Activated CD4-positive, alpha-beta T cell treated with anti-CD3 and anti-CD28 coated beads, Interleukin-2, amount 10 ng/mL, durations not matched to agents 7 days and 5 days (primary cell): ENCODE measurements at regions of chr19 and their contacts with region 1.

Region 1: DNA sequence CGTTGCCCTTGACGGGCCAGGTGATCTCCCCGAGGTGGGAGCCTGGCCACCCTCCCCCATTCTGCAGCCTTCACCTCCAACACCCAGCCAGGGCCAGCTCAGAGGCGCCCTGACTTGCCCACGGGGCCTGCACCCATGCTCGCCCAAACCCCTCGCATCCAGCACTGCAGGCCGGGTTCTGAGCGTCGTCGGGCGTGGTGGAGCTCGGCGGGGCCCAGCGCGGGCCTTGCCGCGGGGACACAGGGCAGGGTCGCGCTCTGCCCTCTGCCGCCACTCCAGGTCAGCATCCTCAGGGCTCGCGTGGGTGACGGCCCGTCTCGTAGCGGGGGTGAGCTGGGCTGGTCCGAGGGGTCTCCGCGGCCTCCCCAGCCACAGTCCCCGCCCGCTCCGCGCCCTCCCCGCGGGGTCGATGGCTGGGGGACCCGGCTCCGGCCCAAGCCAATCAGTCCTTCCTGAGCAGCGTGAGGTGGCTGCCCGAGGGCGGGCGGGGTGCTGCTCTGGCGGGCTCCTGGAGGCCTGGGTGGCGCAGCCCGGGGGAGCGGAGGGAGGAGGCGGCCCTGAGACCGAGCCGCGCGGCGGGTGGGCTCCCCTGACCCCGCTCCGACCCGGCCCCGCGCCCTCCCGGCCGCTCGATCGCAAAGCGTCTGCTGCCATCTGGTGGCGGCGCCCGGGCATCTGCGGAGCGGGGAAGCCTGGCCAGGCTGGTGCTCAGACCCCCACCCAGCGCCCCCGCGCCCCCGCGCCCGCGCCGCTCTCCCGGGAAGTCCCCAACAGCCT is 61.4 kb downstream of the CCNE1 start:
- DNase-seq: peak; percentile 57
- H3K4me3 Mint-ChIP-seq: peak overlapping the region; percentile 52
- H3K27ac Mint-ChIP-seq: no peak overlapping the region
- H3K4me1 Mint-ChIP-seq: peaks cover 13% of the 10 kb centered on the region
- H3K27me3 Mint-ChIP-seq: peaks cover 5% of the 10 kb centered on the region

Region 2: GRCh38 chr19:29724102-29724641 is 149.0 kb before region 1 on chr19:
- CTCF ChIA-PET with region 1: interaction called, 23 read pairs
- POLR2A ChIA-PET with region 1: no interaction called
- DNase-seq: peak; percentile 32
- H3K4me3 Mint-ChIP-seq: peak overlapping the region; percentile 39
- H3K27ac Mint-ChIP-seq: peak overlapping the region; percentile 50
- H3K4me1 Mint-ChIP-seq: peaks cover 9% of the 10 kb centered on the region
- H3K27me3 Mint-ChIP-seq: peaks cover 38% of the 10 kb centered on the region